Calu3 (cell line): ENCODE measurements at regions of chr1 and their contacts with region 1.

Region 1: GRCh38 chr1:45884700-45885099 is 81.3 kb downstream of the MAST2 start:
- DNase-seq: no peak
- H3K4me3 Mint-ChIP-seq: no peak overlapping the region
- H3K27ac Mint-ChIP-seq: no peak overlapping the region
- H3K4me1 Mint-ChIP-seq: peaks cover 15% of the 10 kb centered on the region
- H3K27me3 Mint-ChIP-seq: no peaks in the 10 kb centered on the region
- CTCF ChIP-seq: no peak

Region 2: DNA sequence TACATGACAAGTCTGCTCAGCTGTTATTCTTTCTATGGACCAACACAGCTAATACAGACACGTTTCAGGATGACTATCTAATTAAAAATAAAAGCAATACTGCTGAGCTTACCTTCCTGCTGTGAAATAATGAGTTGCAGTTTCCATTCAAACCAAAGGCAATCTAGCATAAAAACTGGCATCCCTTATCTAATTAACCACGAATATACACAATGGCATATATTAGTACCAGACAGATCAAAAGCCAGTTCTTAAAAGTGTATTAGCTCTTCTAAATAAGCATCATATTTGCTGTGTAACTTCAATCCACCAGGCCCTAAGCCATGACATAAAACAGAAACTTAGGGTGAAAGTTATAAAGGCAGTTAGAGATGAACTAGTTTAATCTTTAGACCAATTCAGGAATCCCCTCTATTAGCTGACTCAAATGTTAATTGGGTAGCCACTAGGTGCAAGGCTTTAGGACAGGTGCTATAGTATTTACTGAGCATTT is 414.3 kb before region 1 on chr1:
- CTCF ChIA-PET with region 1: no interaction called
- intact Hi-C with region 1: no loop called
- DNase-seq: no peak
- H3K4me3 Mint-ChIP-seq: no peak overlapping the region
- H3K27ac Mint-ChIP-seq: no peak overlapping the region
- H3K4me1 Mint-ChIP-seq: no peaks in the 10 kb centered on the region
- H3K27me3 Mint-ChIP-seq: no peaks in the 10 kb centered on the region
- CTCF ChIP-seq: no peak

Region 3: GRCh38 chr1:45643978-45644377 is 240.7 kb before region 1 on chr1:
- CTCF ChIA-PET with region 1: no interaction called
- intact Hi-C with region 1: loop called (anchors 1 kb)
- DNase-seq: peak; percentile 26
- H3K4me3 Mint-ChIP-seq: no peak overlapping the region
- H3K27ac Mint-ChIP-seq: no peak overlapping the region
- H3K4me1 Mint-ChIP-seq: peaks cover 20% of the 10 kb centered on the region
- H3K27me3 Mint-ChIP-seq: no peaks in the 10 kb centered on the region
- CTCF ChIP-seq: no peak

Region 4: GRCh38 chr1:45713711-45714110 is 171.0 kb before region 1 on chr1:
- CTCF ChIA-PET with region 1: no interaction called
- intact Hi-C with region 1: no loop called
- DNase-seq: no peak
- H3K4me3 Mint-ChIP-seq: no peak overlapping the region
- H3K27ac Mint-ChIP-seq: no peak overlapping the region
- H3K4me1 Mint-ChIP-seq: no peaks in the 10 kb centered on the region
- H3K27me3 Mint-ChIP-seq: no peaks in the 10 kb centered on the region
- CTCF ChIP-seq: no peak

Region 5: GRCh38 chr1:45769261-45769932 is 115.3 kb before region 1 on chr1:
- CTCF ChIA-PET with region 1: no interaction called
- intact Hi-C with region 1: no loop called
- DNase-seq: no peak
- H3K4me3 Mint-ChIP-seq: no peak overlapping the region
- H3K27ac Mint-ChIP-seq: no peak overlapping the region
- H3K4me1 Mint-ChIP-seq: no peaks in the 10 kb centered on the region
- H3K27me3 Mint-ChIP-seq: no peaks in the 10 kb centered on the region
- CTCF ChIP-seq: no peak

Region 6: GRCh38 chr1:45803301-45803780 is 81.4 kb before region 1 on chr1 and contains the start of gene MAST2:
- CTCF ChIA-PET with region 1: no interaction called
- intact Hi-C with region 1: loop called (anchors 5 kb)
- DNase-seq: peak; percentile 95
- H3K4me3 Mint-ChIP-seq: peak within 1 kb of the TSS; percentile 87
- H3K27ac Mint-ChIP-seq: peak within 1 kb of the TSS; percentile 42
- H3K4me1 Mint-ChIP-seq: peaks cover 36% of the 10 kb centered on the region
- H3K27me3 Mint-ChIP-seq: no peaks in the 10 kb centered on the region
- CTCF ChIP-seq: no peak
- total RNA-seq, gene MAST2: 31.4 and 36.2 TPM in 2 replicates

Region 7: DNA sequence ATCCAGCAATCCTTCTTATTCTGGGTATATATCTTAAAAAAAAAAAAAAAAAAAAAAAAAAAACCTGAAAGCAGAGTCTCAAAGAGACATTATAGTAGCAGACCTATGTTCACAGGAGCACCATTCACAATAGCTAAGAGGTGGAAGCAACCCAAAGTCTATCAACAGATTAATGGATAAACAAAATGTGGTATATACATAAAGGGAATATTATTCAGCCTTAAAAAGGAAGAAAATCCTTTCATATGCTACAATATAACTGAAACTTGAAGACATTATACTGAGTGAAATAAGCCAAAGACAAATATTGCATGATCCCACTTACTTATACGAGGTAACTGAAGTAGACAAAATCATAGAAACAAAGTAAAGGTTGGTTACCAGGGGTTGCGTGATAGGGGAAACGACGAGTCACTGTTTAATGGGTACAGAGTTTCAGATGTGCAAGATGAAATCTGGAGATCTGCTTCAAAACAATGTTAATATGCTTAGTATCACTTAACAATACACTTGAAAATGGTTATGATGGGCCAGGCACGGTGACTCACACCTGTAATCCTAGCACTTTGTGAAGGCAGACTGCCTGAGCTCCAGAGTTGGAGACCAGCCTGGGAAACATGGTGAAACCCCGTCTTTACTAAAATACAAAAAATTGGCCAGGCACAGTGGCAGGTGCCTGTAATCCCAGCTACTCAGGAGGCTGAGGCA is 218.2 kb after region 1 on chr1:
- CTCF ChIA-PET with region 1: no interaction called
- intact Hi-C with region 1: no loop called
- DNase-seq: no peak
- H3K4me3 Mint-ChIP-seq: no peak overlapping the region
- H3K27ac Mint-ChIP-seq: no peak overlapping the region
- H3K4me1 Mint-ChIP-seq: no peaks in the 10 kb centered on the region
- H3K27me3 Mint-ChIP-seq: no peaks in the 10 kb centered on the region
- CTCF ChIP-seq: no peak